K562 (cell line): ENCODE measurements at regions of chr1 and their contacts with region 1.

Region 1: GRCh38 chr1:48236716-48237470 is 14.4 kb downstream of the SLC5A9 start:
- DNase-seq: peak; percentile 29 to 53 (median 45)
- ATAC-seq: peak; percentile 75
- H3K4me3 ChIP-seq: no peak overlapping the region
- H3K27ac ChIP-seq: no peak overlapping the region
- H3K4me1 ChIP-seq: no peaks in the 10 kb centered on the region
- H3K27me3 ChIP-seq: no peaks in the 10 kb centered on the region
- CTCF ChIP-seq: peak; percentile 43 to 78 (median 73); a peak in 5 of 6 replicates
- EP300 ChIP-seq: no peak
- POLR2A ChIP-seq: no peak
- RAD21 ChIP-seq: peak; percentile 64 to 78

Region 2: DNA sequence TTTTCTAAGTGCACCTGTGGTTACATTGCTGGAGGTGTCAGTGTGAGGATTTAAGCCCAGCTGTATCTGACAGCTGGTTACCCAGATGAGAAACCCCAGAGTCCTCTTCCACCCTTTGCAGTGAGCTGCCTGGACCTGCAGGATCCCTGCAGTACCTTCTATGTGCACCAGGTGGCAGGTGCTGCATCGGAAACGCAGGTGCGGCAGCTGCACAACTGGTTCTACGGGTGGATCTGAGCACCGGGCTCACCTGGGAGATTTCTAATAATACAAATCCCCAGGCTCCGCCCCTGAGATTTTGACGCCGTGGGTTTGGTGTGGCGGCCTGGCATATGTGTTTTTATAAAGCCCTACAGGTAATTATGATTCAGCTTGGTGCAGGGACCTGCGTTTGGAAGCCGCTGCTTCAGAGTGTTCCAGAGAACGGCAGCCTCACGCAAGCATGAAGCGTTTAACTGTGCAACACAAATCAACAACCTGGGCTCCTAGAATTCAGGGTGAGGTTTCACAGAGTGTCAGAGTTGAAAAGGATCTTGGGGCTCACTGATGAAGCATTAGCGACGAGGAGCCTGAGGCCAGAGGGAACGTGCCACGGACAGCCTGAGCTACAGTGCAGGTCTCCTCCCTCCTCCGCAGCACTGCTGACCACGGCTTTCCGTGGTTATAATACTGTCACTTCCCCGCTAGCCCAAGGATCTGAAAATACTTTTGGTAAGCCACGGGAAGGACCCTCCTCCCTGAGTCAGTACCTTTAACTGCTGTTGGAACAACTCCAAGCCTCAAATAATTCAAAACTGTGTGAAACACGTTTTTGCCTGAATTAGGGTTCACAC is 143.0 kb before region 1 on chr1:
- CTCF ChIA-PET with region 1: no interaction called
- POLR2A ChIA-PET with region 1: no interaction called
- in situ Hi-C with region 1: no loop called
- intact Hi-C with region 1: loop called (anchors 2 kb)
- DNase-seq: peak; percentile 75 to 82 (median 79)
- ATAC-seq: peak; percentile 98
- H3K4me3 ChIP-seq: no peak overlapping the region
- H3K27ac ChIP-seq: no peak overlapping the region
- H3K4me1 ChIP-seq: peaks cover 0 to 5% of the 10 kb centered on the region in 2 experiments; a peak in 1 of 5 replicates
- H3K27me3 ChIP-seq: peaks cover 0 to 8% of the 10 kb centered on the region in 2 experiments; a peak in 2 of 5 replicates
- CTCF ChIP-seq: peak; percentile 80 to 89 (median 87)
- EP300 ChIP-seq: no peak
- POLR2A ChIP-seq: no peak
- RAD21 ChIP-seq: peak; percentile 43 to 77